Activated CD4-positive, alpha-beta T cell treated with anti-CD3 and anti-CD28 coated beads for 36 hours (primary cell): ENCODE measurements at regions of chr17 and their contacts with region 1.

Region 1: GRCh38 chr17:40536295-40537171 is 28.7 kb downstream of the CCR7 start:
- DNase-seq: no peak
- ATAC-seq: no peak
- H3K4me3 Mint-ChIP-seq: no peak overlapping the region
- H3K27ac Mint-ChIP-seq: peak overlapping the region; percentile 71
- H3K4me1 Mint-ChIP-seq: peaks cover 92% of the 10 kb centered on the region
- H3K27me3 Mint-ChIP-seq: no peaks in the 10 kb centered on the region

Region 2: GRCh38 chr17:39800540-39800939 is 736.0 kb before region 1 on chr17:
- CTCF ChIA-PET with region 1: no interaction called
- POLR2A ChIA-PET with region 1: no interaction called
- intact Hi-C with region 1: no loop called
- DNase-seq: peak; percentile 69
- ATAC-seq: peak; percentile 100
- H3K4me3 Mint-ChIP-seq: peak overlapping the region; percentile 12
- H3K27ac Mint-ChIP-seq: peak overlapping the region; percentile 83
- H3K4me1 Mint-ChIP-seq: peaks cover 54% of the 10 kb centered on the region
- H3K27me3 Mint-ChIP-seq: no peaks in the 10 kb centered on the region

Region 3: GRCh38 chr17:40399185-40399584 is 137.3 kb before region 1 on chr17:
- CTCF ChIA-PET with region 1: interaction called, 56 read pairs
- POLR2A ChIA-PET with region 1: no interaction called
- intact Hi-C with region 1: loop called (anchors 1 kb)
- DNase-seq: no peak
- ATAC-seq: peak; percentile 47
- H3K4me3 Mint-ChIP-seq: no peak overlapping the region
- H3K27ac Mint-ChIP-seq: no peak overlapping the region
- H3K4me1 Mint-ChIP-seq: peaks cover 12% of the 10 kb centered on the region
- H3K27me3 Mint-ChIP-seq: no peaks in the 10 kb centered on the region

Region 4: GRCh38 chr17:40474419-40475002 is 62.0 kb before region 1 on chr17:
- CTCF ChIA-PET with region 1: interaction called, 43 read pairs
- POLR2A ChIA-PET with region 1: interaction called, 5 read pairs
- intact Hi-C with region 1: no loop called
- DNase-seq: no peak
- ATAC-seq: no peak
- H3K4me3 Mint-ChIP-seq: no peak overlapping the region
- H3K27ac Mint-ChIP-seq: no peak overlapping the region
- H3K4me1 Mint-ChIP-seq: peaks cover 17% of the 10 kb centered on the region
- H3K27me3 Mint-ChIP-seq: no peaks in the 10 kb centered on the region

Region 5: GRCh38 chr17:40516581-40517285 is 19.8 kb before region 1 on chr17:
- CTCF ChIA-PET with region 1: interaction called, 35 read pairs
- POLR2A ChIA-PET with region 1: interaction called, 7 read pairs
- intact Hi-C with region 1: loop called (anchors 1 to 2 kb)
- DNase-seq: peak; percentile 77
- ATAC-seq: peak; percentile 76
- H3K4me3 Mint-ChIP-seq: peak overlapping the region; percentile 76
- H3K27ac Mint-ChIP-seq: peak overlapping the region; percentile 73
- H3K4me1 Mint-ChIP-seq: peaks cover 57% of the 10 kb centered on the region
- H3K27me3 Mint-ChIP-seq: peaks cover 2% of the 10 kb centered on the region